ENCODE measurements at regions of chr9 and their contacts with region 1.

Region 1: DNA sequence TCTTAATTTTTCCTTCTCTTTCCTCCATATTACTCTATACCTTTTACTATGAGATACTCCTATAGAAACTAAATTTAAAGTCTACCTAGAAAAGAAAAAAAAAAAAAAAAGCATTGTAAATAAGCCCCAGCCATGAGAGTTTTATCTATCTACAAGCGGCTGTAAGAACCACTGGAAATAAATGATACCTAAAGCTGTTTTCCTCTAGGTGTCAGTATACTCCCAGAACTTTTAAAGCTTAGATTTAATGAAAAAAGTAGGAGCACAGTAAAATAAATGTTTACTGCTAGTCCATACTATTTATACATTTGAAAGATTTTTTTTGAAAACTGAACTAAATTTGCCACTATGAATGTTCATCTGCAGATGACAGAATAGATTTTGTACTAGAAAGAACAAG is 26.2 kb downstream of the TYRP1 start:
- DNase-seq: no peak
- ATAC-seq: peak in 3 of 8 donors; percentile 59 to 69 (median 65)
- H3K4me3 ChIP-seq: no peak overlapping the region
- H3K27ac ChIP-seq: no peak overlapping the region
- H3K4me1 ChIP-seq: no peaks in the 10 kb centered on the region
- H3K27me3 ChIP-seq: no peaks in the 10 kb centered on the region
- CTCF ChIP-seq: peak in 8 of 9 donors; percentile 31 to 68 (median 55)

Region 2: DNA sequence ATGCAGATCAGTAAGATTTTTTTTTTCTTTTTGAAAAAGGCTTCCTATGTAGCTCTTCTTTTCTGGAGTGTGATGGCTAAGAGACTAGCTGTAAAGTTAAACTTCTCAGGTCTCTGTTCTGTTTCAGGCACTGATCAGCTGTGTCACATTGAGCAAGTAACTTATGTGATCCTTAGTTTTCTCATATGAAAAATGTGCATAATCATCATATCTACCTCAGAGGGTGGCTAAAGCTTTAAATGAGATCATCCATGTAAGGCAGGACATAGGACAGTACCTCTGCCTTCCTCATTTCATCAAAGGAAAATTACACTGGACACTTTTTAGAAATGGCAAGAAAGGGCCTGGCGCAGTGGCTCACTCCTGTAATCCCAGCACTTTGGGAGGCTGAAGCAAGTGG is 262.2 kb before region 1 on chr9:
- intact Hi-C with region 1: no loop called
- DNase-seq: no peak
- ATAC-seq: no peak
- H3K4me3 ChIP-seq: no peak overlapping the region
- H3K27ac ChIP-seq: no peak overlapping the region
- H3K4me1 ChIP-seq: no peaks in the 10 kb centered on the region
- H3K27me3 ChIP-seq: no peaks in the 10 kb centered on the region
- CTCF ChIP-seq: no peak

Region 3: GRCh38 chr9:12813960-12814876 is 94.8 kb after region 1 on chr9:
- intact Hi-C with region 1: loop called in 2 of 10 experiments (anchors 10 kb)
- DNase-seq: peak; percentile 11 to 15
- ATAC-seq: peak in 7 of 8 donors; percentile 59 to 93 (median 84)
- H3K4me3 ChIP-seq: peak overlapping the region in 4 of 10 donors; percentile 1 to 31 (median 12)
- H3K27ac ChIP-seq: peak overlapping the region in 7 of 10 donors; percentile 17 to 67 (median 49)
- H3K4me1 ChIP-seq: peaks cover 0 to 54% (median 20%) of the 10 kb centered on the region in 9 donors
- H3K27me3 ChIP-seq: no peaks in the 10 kb centered on the region
- CTCF ChIP-seq: peak in 3 of 9 donors; percentile 26 to 47 (median 41)

Region 4: GRCh38 chr9:12884737-12885414 is 165.4 kb after region 1 on chr9:
- intact Hi-C with region 1: loop called in 9 of 10 experiments (anchors 2 to 10 kb)
- DNase-seq: no peak
- ATAC-seq: peak in 6 of 8 donors; percentile 52 to 72 (median 59)
- H3K4me3 ChIP-seq: no peak overlapping the region
- H3K27ac ChIP-seq: no peak overlapping the region
- H3K4me1 ChIP-seq: peaks cover 0 to 29% (median 5%) of the 10 kb centered on the region in 9 donors
- H3K27me3 ChIP-seq: no peaks in the 10 kb centered on the region
- CTCF ChIP-seq: peak; percentile 31 to 76 (median 60)

Region 5: GRCh38 chr9:12988253-12988652 is 268.8 kb after region 1 on chr9:
- intact Hi-C with region 1: loop called in 2 of 10 experiments (anchors 10 kb)
- DNase-seq: no peak
- ATAC-seq: no peak
- H3K4me3 ChIP-seq: no peak overlapping the region
- H3K27ac ChIP-seq: no peak overlapping the region
- H3K4me1 ChIP-seq: no peaks in the 10 kb centered on the region
- H3K27me3 ChIP-seq: no peaks in the 10 kb centered on the region
- CTCF ChIP-seq: peak in 1 of 9 donors; percentile 10

Region 6: DNA sequence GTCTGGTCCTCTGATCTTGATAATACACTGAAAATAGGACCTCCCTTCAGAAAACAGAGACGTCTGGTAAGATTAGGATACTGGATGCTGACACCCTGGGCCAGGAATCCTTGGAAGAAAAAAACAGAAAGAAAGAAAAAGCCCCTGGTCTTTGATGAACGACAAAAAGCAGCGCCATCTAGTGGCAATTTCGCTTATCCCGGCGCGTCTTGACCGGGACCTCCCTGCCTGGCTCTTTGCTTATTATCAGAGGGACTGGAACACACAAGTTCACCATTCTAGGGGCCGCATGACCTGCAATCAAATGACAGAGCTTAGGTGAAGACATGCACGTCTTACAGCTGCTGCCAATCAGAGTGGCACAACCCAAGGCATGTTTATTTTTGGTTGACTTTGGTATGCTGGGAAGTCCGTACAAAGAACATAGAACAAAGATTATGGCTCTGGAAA is 1709.4 kb after region 1 on chr9:
- intact Hi-C with region 1: loop called in 1 of 10 experiments (anchors 10 kb)
- DNase-seq: peak; percentile 64 to 81
- ATAC-seq: peak; percentile 65 to 87 (median 76)
- H3K4me3 ChIP-seq: no peak overlapping the region
- H3K27ac ChIP-seq: peak overlapping the region in 5 of 10 donors; percentile 10 to 65 (median 29)
- H3K4me1 ChIP-seq: peaks cover 6 to 30% (median 14%) of the 10 kb centered on the region in 9 donors
- H3K27me3 ChIP-seq: no peaks in the 10 kb centered on the region
- CTCF ChIP-seq: peak; percentile 67 to 87 (median 82)